ENCODE measurements at regions of chr2 and their contacts with region 1.

Region 1: GRCh38 chr2:95264624-95265023 is 9.6 kb upstream of the PROM2 start:
- DNase-seq: peak; percentile 39 to 87 (median 71)

Region 2: GRCh38 chr2:95215018-95215612 is 49.5 kb before region 1 on chr2:
- intact Hi-C with region 1: no loop called
- DNase-seq: no peak

Region 3: GRCh38 chr2:95374921-95375471 is 110.4 kb after region 1 on chr2:
- intact Hi-C with region 1: loop called (anchors 5 kb)
- DNase-seq: peak in 8 of 42 donors; percentile 4 to 23 (median 14)